ENCODE measurements at regions of chr7 and their contacts with region 1.

Region 1: DNA sequence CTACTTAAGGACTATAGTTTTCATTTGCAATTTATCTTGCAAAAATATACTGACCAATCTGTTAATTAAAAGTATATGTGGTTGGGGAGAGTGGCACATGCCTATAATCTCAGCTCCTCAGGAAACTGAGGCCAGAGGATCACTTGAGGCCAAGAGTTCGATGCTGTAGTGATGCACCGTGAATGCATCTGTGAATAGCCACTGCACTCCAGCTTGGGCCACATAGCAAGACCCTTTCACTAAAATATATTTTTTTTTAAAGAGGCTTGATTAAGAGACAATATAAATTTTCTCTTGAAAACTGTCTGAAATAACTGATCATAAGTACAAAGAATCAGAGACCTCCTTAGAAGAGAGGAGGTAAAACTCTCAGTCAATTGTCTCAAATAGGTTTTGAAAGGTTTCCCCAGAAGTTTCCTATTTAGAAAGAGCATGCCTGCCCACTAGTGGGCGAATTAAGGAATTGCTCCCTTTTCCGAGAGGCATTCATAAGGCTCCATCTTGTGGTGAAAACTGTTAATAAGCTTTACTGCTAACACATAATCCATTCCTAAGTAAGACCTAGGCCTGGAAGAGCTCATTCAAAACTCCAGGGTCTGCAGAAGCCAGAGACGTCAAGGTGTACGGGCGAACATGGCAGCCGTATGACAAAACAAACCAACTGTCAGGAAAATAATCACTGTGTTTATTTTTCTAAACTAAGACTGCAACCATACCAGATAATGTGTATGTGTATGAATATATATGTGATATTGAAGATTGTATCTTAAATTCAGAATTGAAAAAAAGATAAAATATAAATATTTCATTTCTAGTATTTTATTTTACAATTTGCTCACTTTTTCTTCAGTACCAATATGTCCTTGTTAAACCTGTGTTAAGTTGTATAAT is 6.8 kb upstream of the TAS2R40 start:
- DNase-seq: peak; percentile 69
- ATAC-seq: peak; percentile 98
- H3K4me3 Mint-ChIP-seq: no peak overlapping the region
- H3K27ac Mint-ChIP-seq: no peak overlapping the region
- H3K4me1 Mint-ChIP-seq: no peaks in the 10 kb centered on the region
- H3K27me3 Mint-ChIP-seq: no peaks in the 10 kb centered on the region
- CTCF ChIP-seq: peak; percentile 100

Region 2: DNA sequence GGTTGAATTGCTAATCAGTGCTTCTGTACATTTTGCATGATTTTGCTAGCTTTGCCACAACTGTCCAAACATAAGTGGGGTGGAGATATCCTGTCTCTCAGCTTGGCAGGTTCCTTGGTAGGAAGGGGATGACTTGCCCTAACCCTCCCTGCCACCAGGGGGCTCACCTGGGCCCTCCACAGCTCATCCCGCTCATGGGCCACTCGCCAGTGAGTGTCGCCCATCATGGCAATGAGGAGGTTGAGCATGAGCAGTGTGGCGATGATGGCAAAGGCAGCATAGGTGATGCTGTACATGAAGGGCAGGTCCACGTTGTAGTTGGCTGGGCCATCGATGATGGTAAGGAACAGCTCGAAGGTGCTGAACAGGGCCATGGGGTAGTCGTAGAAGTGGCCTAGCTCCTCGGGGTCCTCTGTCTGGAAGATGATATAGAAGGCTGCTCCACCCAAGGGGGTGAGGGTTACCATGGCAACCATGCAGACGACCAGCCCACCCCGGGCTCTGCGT is 341.7 kb before region 1 on chr7:
- CTCF ChIA-PET with region 1: interaction called, 24 read pairs
- POLR2A ChIA-PET with region 1: no interaction called
- intact Hi-C with region 1: loop called (anchors 10 kb)
- DNase-seq: peak; percentile 58
- ATAC-seq: peak; percentile 91
- H3K4me3 Mint-ChIP-seq: no peak overlapping the region
- H3K27ac Mint-ChIP-seq: no peak overlapping the region
- H3K4me1 Mint-ChIP-seq: no peaks in the 10 kb centered on the region
- H3K27me3 Mint-ChIP-seq: no peaks in the 10 kb centered on the region
- CTCF ChIP-seq: peak; percentile 69

Region 3: DNA sequence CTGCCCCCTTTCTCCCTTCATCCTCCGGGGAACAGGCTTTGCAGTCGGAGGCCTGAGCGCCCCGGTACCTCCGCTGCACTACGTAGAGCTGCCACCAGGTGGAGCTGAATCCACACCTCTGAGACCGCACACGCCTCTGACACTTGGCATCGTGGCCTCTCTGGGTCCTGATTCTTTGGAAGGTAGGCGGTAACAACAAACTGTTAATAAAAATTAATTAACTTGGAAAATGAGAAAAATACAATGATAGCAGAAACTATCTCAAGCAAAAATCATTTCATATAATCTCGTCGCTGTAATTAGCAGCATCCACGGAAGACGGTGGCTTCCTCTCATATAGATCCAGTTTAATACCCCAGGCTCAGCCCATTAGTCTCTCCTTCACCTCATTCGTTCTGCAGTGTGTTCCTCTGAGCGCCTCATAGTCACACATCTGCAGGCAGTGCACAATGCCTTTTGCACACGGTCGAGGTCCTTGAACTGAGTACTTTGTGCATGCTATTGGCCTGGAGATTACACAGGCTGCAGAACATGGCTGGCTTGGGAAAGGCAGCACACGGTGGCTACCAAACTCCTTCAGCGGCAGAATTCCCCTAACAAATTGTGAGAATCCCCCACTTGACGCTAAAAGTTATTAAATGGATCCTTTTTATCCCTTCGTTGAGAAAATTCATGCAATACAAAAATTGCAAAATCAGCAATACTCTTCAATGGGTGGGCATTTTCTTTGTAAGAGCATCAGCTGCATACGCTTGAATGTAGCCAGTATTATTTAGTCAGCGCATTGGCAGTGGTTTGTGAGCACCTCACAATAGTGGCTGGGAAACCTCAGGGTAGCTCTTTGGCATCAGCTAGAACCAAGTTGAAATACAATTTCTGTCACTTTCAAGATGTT is 206.8 kb before region 1 on chr7:
- CTCF ChIA-PET with region 1: interaction called, 380 read pairs
- POLR2A ChIA-PET with region 1: no interaction called
- intact Hi-C with region 1: loop called (anchors 1 kb)
- DNase-seq: peak; percentile 89
- ATAC-seq: peak; percentile 98
- H3K4me3 Mint-ChIP-seq: no peak overlapping the region
- H3K27ac Mint-ChIP-seq: no peak overlapping the region
- H3K4me1 Mint-ChIP-seq: peaks cover 5% of the 10 kb centered on the region
- H3K27me3 Mint-ChIP-seq: peaks cover 5% of the 10 kb centered on the region
- CTCF ChIP-seq: peak; percentile 92

Region 4: GRCh38 chr7:143049362-143049761 is 165.7 kb before region 1 on chr7:
- CTCF ChIA-PET with region 1: interaction called, 10 read pairs
- POLR2A ChIA-PET with region 1: no interaction called
- intact Hi-C with region 1: no loop called
- DNase-seq: no peak
- ATAC-seq: no peak
- H3K4me3 Mint-ChIP-seq: no peak overlapping the region
- H3K27ac Mint-ChIP-seq: no peak overlapping the region
- H3K4me1 Mint-ChIP-seq: peaks cover 6% of the 10 kb centered on the region
- H3K27me3 Mint-ChIP-seq: peaks cover 1% of the 10 kb centered on the region
- CTCF ChIP-seq: no peak

Region 5: GRCh38 chr7:143183024-143183423 is 32.0 kb before region 1 on chr7 and contains the start of gene TAS2R39:
- CTCF ChIA-PET with region 1: interaction called, 10 read pairs
- POLR2A ChIA-PET with region 1: no interaction called
- intact Hi-C with region 1: no loop called
- DNase-seq: no peak
- ATAC-seq: no peak
- H3K4me3 Mint-ChIP-seq: no peak within 1 kb of the TSS
- H3K27ac Mint-ChIP-seq: no peak within 1 kb of the TSS
- H3K4me1 Mint-ChIP-seq: no peaks in the 10 kb centered on the region
- H3K27me3 Mint-ChIP-seq: peaks cover 10% of the 10 kb centered on the region
- CTCF ChIP-seq: no peak
- total RNA-seq, gene TAS2R39: not detected

Region 6: DNA sequence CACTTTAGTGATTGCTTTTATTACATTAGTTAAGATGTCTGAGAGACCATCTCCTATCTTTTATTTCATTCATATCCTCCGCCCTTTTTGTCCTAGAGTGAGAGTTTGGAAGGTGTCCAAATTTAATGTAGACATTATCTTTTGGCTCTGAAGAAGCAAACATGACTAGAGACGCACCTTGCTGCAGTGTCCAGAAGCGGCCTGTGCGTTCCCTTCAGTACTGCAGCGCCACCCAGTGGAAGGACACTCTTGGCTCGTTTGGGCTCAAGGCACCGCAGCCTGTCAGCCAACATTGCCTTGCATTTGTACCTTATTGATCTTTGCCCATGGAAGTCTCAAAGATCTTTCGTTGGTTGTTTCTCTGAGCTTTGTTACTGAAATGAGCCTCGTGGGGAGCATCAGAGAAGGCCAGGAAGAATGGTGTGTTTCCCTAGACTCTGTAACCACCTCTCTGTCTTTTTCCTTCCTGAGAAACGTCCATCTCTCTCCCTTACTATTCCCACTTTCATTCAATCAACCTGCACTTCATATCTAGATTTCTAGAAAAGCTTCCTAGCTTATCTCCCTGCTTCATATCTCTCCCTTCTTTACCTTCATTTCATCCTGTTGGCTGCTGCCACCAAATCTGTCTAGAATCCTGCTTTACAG is 90.5 kb after region 1 on chr7:
- CTCF ChIA-PET with region 1: interaction called, 21 read pairs
- POLR2A ChIA-PET with region 1: no interaction called
- intact Hi-C with region 1: no loop called
- DNase-seq: peak; percentile 86
- ATAC-seq: peak; percentile 86
- H3K4me3 Mint-ChIP-seq: no peak overlapping the region
- H3K27ac Mint-ChIP-seq: peak overlapping the region; percentile 58
- H3K4me1 Mint-ChIP-seq: peaks cover 46% of the 10 kb centered on the region
- H3K27me3 Mint-ChIP-seq: no peaks in the 10 kb centered on the region
- CTCF ChIP-seq: peak; percentile 82

Region 7: DNA sequence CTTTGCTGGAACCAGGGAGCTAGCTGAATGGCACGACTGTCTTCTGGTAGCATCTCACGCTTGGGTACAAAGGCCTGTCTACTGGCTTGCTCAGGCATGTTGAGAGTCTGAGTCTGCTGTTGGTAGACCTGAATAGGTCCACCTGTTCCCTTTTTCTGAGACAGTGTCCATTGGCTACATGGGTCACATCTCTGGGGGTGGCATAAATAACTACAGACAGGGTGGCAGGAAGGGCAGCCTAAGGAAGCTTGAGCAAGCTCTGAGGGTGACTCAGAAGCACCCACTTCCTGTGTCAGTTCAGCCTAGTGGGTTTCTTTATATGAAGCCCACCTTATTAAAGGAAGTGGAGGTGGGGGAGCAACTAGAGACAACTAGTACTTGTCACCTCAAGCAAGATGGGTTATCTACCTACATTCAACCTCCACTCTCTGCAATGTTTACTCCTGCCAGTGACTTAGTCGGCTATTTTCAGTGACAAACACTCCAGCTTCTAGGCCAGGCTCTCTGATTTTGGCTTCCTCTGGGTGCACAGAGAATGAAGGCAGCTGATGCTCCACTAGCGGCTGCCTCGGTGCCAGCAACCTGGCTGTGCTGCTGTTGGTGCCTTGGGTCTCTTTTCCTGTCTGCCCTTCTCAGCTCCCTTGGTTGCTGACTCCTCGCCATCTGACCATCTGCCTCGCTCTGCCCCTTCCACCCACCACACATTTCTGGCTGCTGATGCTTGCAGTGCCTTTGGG is 160.4 kb after region 1 on chr7:
- CTCF ChIA-PET with region 1: no interaction called
- POLR2A ChIA-PET with region 1: no interaction called
- intact Hi-C with region 1: no loop called
- DNase-seq: peak; percentile 73
- ATAC-seq: peak; percentile 72
- H3K4me3 Mint-ChIP-seq: peak overlapping the region; percentile 48
- H3K27ac Mint-ChIP-seq: peak overlapping the region; percentile 93
- H3K4me1 Mint-ChIP-seq: peaks cover 73% of the 10 kb centered on the region
- H3K27me3 Mint-ChIP-seq: no peaks in the 10 kb centered on the region
- CTCF ChIP-seq: no peak

Region 8: GRCh38 chr7:143463556-143463955 is 248.5 kb after region 1 on chr7:
- CTCF ChIA-PET with region 1: no interaction called
- POLR2A ChIA-PET with region 1: no interaction called
- intact Hi-C with region 1: no loop called
- DNase-seq: no peak
- ATAC-seq: no peak
- H3K4me3 Mint-ChIP-seq: no peak overlapping the region
- H3K27ac Mint-ChIP-seq: no peak overlapping the region
- H3K4me1 Mint-ChIP-seq: peaks cover 3% of the 10 kb centered on the region
- H3K27me3 Mint-ChIP-seq: no peaks in the 10 kb centered on the region
- CTCF ChIP-seq: no peak

Measured in activated CD8-positive, alpha-beta T cell treated with anti-CD3 and anti-CD28 coated beads for 36 hours (primary cell).